Endothelial cell of umbilical vein (primary cell): ENCODE measurements at regions of chr11 and their contacts with region 1.

Region 1: GRCh38 chr11:72683782-72684200 is 9.6 kb upstream of the PDE2A start:
- DNase-seq: peak; percentile 54
- H3K4me3 ChIP-seq: no peak overlapping the region
- H3K27ac ChIP-seq: no peak overlapping the region
- H3K4me1 ChIP-seq: no peaks in the 10 kb centered on the region
- H3K27me3 ChIP-seq: peaks cover 0 to 2% of the 10 kb centered on the region in 2 experiments
- CTCF ChIP-seq: peak; percentile 97
- POLR2A ChIP-seq: no peak

Region 2: GRCh38 chr11:72238040-72238450 is 445.7 kb before region 1 on chr11:
- CTCF ChIA-PET with region 1: no interaction called
- POLR2A ChIA-PET with region 1: interaction called, 12 read pairs
- dilution Hi-C with region 1: no loop called
- intact Hi-C with region 1: no loop called
- DNase-seq: peak; percentile 51
- H3K4me3 ChIP-seq: no peak overlapping the region
- H3K27ac ChIP-seq: no peak overlapping the region
- H3K4me1 ChIP-seq: peaks cover 12% of the 10 kb centered on the region
- H3K27me3 ChIP-seq: peaks cover 28 to 37% of the 10 kb centered on the region in 2 experiments
- CTCF ChIP-seq: peak; percentile 77 to 85
- POLR2A ChIP-seq: peak; percentile 45

Region 3: DNA sequence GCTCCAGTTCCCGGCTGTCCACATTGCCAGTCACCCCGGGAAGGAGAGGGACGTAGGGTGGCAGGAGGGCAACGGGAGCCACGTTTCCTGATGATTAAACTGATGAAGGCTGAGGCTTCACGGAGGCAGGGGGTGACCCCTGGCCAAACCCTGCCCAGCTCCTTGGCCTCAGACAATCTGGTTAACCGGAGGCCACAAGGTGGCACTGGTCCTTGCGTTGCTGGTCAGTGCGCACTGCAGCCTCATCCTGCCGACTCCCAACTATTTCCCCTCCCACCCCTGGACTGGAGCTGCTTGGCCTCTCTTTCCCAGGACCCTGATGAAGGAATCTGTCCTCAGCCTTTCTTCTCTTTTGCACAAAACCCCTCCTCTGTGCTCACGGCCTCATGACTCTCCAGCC is 84.9 kb before region 1 on chr11:
- CTCF ChIA-PET with region 1: interaction called, 166 read pairs
- POLR2A ChIA-PET with region 1: no interaction called
- dilution Hi-C with region 1: no loop called
- intact Hi-C with region 1: loop called (anchors 1 kb)
- DNase-seq: peak; percentile 44
- H3K4me3 ChIP-seq: no peak overlapping the region
- H3K27ac ChIP-seq: no peak overlapping the region
- H3K4me1 ChIP-seq: no peaks in the 10 kb centered on the region
- H3K27me3 ChIP-seq: no peaks in the 10 kb centered on the region
- CTCF ChIP-seq: peak; percentile 59 to 85
- POLR2A ChIP-seq: no peak

Region 4: GRCh38 chr11:72642884-72643511 is 40.8 kb before region 1 on chr11:
- CTCF ChIA-PET with region 1: interaction called, 10 read pairs
- POLR2A ChIA-PET with region 1: no interaction called
- dilution Hi-C with region 1: no loop called
- intact Hi-C with region 1: loop called (anchors 2 kb)
- DNase-seq: peak; percentile 78
- H3K4me3 ChIP-seq: peak overlapping the region in 1 of 3 experiments; percentile 43
- H3K27ac ChIP-seq: no peak overlapping the region
- H3K4me1 ChIP-seq: peaks cover 9% of the 10 kb centered on the region
- H3K27me3 ChIP-seq: peaks cover 0 to 2% of the 10 kb centered on the region in 2 experiments
- CTCF ChIP-seq: peak; percentile 93 to 97
- POLR2A ChIP-seq: no peak

Region 5: DNA sequence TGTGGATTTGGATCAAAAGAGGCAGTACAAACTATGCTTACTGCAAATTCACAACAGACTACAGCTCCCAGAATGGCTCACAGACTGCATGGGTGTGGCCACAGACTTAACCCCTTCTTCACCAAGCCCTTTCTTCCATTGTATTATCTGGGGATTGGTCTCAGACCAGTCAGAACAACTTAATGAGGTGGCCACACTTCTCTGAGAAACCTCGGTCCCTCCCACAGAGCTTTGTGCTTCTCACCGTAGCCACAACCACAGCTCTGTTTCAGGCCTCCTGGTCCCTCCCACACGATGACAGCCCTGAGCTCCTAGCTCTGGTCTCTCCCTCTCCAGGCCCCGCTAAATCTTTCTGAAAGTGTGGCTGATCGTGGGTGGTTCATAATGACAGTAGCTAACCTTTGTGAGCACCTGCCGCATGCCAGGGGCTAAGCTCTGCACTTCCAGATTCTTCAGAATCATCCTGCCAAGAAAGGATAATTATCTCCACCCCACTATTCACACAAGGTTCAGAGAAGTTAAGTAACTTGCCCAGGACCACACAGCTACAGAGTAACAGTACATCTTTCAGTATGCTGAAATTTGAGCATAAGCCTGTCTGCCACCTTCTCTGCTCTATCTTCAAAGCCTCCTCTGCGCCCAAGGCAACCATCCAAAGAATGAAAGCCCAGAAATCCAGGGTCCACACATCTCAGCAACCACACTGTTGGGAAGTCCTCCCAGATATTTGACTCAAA is 15.0 kb before region 1 on chr11:
- CTCF ChIA-PET with region 1: interaction called, 60 read pairs
- POLR2A ChIA-PET with region 1: no interaction called
- dilution Hi-C with region 1: no loop called
- intact Hi-C with region 1: no loop called
- DNase-seq: no peak
- H3K4me3 ChIP-seq: no peak overlapping the region
- H3K27ac ChIP-seq: no peak overlapping the region
- H3K4me1 ChIP-seq: no peaks in the 10 kb centered on the region
- H3K27me3 ChIP-seq: peaks cover 9 to 15% of the 10 kb centered on the region in 2 experiments
- CTCF ChIP-seq: no peak
- POLR2A ChIP-seq: no peak

Region 6: DNA sequence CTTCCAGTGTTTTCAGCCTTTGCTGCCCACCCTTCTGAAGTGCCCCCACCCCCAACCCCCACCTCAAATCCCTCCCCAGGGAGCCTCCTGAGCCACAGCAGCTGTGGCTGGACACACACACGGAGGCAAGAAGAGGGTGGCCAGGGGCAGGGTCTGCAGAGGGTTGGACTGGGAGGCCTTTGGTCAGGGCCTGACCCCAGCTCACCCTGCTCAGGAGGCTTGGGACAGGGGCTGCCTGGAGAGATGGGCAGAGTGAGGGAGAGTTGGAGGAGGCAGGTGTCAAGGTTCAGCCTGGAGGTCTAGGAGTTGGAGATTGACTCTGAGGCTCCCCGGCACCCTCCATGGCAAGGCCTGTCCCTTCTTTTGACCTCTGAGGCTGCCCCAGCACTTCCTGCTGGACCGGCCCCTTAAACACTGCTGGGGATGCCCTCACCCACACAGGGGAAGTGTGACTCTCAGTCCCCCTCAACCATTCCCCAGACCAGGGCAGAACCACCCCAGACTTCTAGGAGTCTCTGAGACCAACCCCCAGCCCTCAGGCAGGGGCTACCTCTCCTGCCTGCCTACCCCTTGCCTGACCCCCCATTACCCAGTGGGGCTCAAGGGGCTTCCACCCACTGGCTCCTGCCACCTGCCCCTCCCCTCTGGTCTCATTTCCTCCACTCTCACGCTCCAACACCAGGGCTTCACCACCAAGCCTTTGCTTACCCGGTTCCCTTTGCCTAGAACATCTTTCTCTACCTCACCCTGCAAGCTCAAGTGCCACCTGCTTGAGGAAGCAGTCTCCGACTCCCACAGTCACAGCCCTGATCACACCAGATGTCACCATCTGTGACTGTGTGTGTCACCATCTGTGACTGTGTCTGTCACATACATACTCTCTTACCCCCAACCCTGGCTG is 59.8 kb after region 1 on chr11:
- CTCF ChIA-PET with region 1: no interaction called
- POLR2A ChIA-PET with region 1: no interaction called
- dilution Hi-C with region 1: no loop called
- intact Hi-C with region 1: no loop called
- DNase-seq: no peak
- H3K4me3 ChIP-seq: no peak overlapping the region
- H3K27ac ChIP-seq: no peak overlapping the region
- H3K4me1 ChIP-seq: no peaks in the 10 kb centered on the region
- H3K27me3 ChIP-seq: no peaks in the 10 kb centered on the region
- CTCF ChIP-seq: no peak
- POLR2A ChIP-seq: no peak

Region 7: DNA sequence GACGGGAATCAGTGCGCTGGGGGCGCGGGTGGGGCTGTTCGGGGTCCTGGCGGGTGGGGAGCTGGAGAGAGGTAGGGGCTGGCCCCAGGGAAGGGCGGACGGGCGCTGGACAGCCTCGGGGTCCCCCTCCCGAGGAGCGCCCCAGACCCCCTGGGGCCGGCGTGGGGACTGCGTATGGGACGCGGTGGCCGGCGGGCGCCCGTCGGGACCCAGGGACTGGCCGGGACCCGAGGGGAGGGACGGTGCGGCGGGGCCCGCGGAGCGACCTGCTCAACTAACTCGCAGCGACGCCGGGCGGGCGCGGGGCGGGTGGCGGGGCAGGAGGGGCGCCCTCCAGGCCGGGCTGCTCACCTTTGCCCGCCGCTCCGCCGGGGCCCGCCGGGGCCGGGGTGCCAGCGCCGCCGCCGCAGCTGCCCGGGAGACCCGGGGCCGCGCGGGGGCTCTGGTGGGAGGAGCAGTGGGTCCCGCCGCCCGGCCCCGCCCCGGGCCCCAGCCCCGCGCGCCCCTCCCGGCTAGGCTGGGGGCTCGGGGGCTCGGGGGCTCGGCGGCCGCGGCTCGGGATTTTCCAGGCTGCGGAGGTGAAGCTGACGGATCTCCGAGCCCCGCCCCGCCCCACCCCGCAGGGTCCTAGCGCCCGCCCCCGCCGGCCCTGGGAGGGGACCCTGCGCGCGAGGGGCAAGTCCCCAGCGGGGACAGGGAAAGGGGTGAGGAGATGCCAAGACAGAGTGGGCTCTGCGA is 97.7 kb after region 1 on chr11:
- CTCF ChIA-PET with region 1: no interaction called
- POLR2A ChIA-PET with region 1: no interaction called
- dilution Hi-C with region 1: no loop called
- intact Hi-C with region 1: no loop called
- DNase-seq: no peak
- H3K4me3 ChIP-seq: peak overlapping the region in 1 of 3 experiments; percentile 50
- H3K27ac ChIP-seq: no peak overlapping the region
- H3K4me1 ChIP-seq: peaks cover 3% of the 10 kb centered on the region
- H3K27me3 ChIP-seq: no peaks in the 10 kb centered on the region
- CTCF ChIP-seq: no peak
- POLR2A ChIP-seq: no peak

Region 8: DNA sequence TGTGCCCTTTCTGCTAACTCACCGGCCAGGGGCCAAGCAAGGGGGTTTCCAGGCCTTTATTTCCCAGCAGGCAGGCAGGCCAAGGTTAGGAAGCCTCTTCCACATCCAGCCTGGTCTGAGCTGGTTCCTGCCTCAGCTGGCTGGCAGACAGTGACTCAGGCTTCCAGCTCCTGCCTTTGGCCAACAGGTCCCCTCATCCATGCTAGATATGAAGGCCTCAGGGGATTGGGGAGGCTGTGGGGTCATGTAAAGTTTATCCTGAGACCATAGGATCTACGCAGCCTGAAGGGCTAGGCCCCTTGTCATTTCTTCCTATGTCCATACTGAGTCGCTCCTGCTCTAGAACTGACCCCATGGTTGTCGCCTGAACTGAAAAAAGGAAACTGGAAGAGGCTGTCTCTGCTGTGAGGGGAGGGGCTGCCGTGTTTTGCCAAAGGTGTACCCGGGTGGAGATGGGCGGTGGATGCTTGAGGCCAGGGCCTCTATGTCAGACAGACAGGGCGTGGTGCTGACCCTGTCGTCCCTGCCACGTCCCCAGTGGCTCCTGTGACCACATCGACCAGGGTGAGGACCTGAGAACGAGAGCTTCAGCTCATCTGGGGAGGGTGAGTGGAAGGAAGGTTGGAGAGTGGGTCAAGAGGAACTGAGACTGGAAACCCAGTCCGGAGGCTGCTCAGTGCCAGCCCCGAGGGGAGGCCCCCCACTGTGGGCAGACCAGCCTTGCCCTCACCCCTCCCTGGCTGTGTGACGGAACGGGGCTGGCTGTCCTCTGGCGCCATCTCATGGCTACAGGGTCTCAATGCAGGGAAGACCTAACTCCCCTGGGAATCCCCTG is 605.3 kb after region 1 on chr11:
- CTCF ChIA-PET with region 1: interaction called, 12 read pairs
- POLR2A ChIA-PET with region 1: no interaction called
- dilution Hi-C with region 1: no loop called
- intact Hi-C with region 1: loop called (anchors 1 kb)
- DNase-seq: peak; percentile 86
- H3K4me3 ChIP-seq: no peak overlapping the region
- H3K27ac ChIP-seq: peak overlapping the region; percentile 71
- H3K4me1 ChIP-seq: peaks cover 17% of the 10 kb centered on the region
- H3K27me3 ChIP-seq: no peaks in the 10 kb centered on the region
- CTCF ChIP-seq: peak; percentile 95
- POLR2A ChIP-seq: no peak